H1 (cell line): ENCODE measurements at regions of chr1 and their contacts with region 1.

Region 1: DNA sequence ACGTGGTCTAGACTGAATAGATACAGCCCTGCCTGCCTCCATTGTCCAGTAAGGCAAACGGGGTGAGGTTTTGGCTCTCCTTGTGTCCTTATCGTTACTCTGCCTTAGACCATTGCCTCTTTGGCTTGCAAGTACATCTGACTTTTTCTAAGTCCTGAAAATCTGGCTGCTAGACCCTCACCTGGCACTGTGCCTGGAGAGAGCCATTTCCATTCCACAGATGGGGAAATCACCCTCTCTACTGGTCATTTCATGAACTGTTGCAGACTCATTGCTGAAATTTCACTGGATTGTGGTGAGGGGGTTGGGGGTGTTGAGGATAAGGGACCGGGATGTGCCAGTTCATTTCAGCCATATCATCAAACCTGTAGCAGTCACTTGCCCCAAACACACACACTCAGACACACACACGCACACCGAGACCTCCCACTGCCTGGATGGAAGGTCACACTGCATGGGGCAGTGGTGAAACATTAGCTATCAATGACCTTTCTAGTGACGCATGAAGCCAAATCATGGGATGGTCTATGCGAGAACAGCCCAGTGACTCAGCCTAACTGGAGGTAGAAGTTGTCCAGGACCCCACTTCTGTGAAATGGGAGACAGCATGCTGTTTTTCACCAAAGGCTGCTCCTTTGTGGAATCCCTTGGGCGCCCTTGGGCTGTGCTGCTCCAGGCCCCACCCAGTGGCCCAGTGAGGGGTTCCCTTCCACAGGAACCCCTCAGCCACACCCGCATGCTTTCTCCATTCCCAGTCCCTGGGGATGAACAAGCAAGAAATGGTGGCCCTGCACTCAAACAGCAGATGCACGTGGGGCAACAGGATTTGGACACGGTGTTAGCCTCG is 34.9 kb upstream of the VASH2 start:
- DNase-seq: peak in 1 of 2 experiments; percentile 56
- H3K4me3 ChIP-seq: peak overlapping the region in 2 of 4 experiments; percentile 17 to 51; a peak in 2 of 8 replicates
- H3K27ac ChIP-seq: peak overlapping the region; percentile 83
- H3K4me1 ChIP-seq: peaks cover 10 to 27% (median 20%) of the 10 kb centered on the region in 4 experiments
- H3K27me3 ChIP-seq: no peaks in the 10 kb centered on the region
- CTCF ChIP-seq: peak; percentile 34 to 77 (median 58)
- EP300 ChIP-seq: no peak
- POLR2A ChIP-seq: no peak; a peak in 1 of 3 replicates
- RAD21 ChIP-seq: peak; percentile 77 to 85

Region 2: DNA sequence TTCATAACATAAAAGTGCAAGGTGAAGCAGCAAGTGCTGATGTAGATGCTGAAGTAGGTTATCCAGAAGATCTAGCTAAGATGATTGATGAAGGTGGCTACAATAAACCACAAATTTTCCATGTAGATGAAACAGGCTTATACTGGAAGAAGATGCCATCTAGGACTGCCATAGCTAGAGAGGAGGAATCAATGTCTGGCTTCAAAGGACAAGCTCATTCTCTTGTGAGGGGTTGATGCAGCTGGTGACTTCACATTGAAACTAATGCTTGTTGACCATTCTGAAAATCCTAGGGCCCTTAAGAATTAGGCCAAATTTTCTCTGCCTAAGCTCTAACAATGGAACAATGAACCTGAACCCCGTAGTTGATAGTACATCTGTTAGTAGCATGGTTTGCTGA is 23.4 kb before region 1 on chr1:
- CTCF ChIA-PET with region 1: interaction called, 3 read pairs
- POLR2A ChIA-PET with region 1: interaction called, 94 read pairs
- DNase-seq: no peak
- H3K4me3 ChIP-seq: no peak overlapping the region
- H3K27ac ChIP-seq: no peak overlapping the region; the same call in 1 of the 2 replicates
- H3K4me1 ChIP-seq: no peaks in the 10 kb centered on the region
- H3K27me3 ChIP-seq: no peaks in the 10 kb centered on the region
- CTCF ChIP-seq: no peak
- EP300 ChIP-seq: no peak
- POLR2A ChIP-seq: peak; percentile 15 to 67; a peak in 2 of 3 replicates
- RAD21 ChIP-seq: no peak

Region 3: DNA sequence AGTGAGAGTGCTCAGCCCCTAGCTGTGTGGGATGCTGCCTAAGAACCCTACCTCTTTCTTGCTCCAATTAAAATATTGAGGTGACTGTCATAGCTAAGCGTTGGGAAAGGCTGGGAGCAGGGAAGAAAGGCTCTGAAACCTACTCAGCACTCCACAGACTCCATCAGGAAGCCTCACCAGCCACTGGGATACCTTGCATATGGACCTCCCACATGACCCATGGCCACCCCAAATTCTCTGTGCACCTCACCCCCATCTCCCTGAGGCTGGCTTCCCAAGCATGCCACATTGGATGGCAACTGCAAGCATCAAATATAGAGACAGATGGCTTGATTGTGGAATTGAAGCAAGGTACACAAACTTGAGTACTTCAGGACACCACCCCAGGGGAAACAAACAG is 15.6 kb before region 1 on chr1:
- CTCF ChIA-PET with region 1: interaction called, 11 read pairs
- POLR2A ChIA-PET with region 1: interaction called, 94 read pairs
- DNase-seq: no peak
- H3K4me3 ChIP-seq: no peak overlapping the region
- H3K27ac ChIP-seq: peak overlapping the region; percentile 8; the same call in 1 of the 2 replicates
- H3K4me1 ChIP-seq: peaks cover 3 to 9% (median 4%) of the 10 kb centered on the region in 4 experiments; a peak in 5 of 7 replicates
- H3K27me3 ChIP-seq: no peaks in the 10 kb centered on the region
- CTCF ChIP-seq: no peak
- EP300 ChIP-seq: no peak
- POLR2A ChIP-seq: no peak; a peak in 1 of 3 replicates
- RAD21 ChIP-seq: no peak

Region 4: DNA sequence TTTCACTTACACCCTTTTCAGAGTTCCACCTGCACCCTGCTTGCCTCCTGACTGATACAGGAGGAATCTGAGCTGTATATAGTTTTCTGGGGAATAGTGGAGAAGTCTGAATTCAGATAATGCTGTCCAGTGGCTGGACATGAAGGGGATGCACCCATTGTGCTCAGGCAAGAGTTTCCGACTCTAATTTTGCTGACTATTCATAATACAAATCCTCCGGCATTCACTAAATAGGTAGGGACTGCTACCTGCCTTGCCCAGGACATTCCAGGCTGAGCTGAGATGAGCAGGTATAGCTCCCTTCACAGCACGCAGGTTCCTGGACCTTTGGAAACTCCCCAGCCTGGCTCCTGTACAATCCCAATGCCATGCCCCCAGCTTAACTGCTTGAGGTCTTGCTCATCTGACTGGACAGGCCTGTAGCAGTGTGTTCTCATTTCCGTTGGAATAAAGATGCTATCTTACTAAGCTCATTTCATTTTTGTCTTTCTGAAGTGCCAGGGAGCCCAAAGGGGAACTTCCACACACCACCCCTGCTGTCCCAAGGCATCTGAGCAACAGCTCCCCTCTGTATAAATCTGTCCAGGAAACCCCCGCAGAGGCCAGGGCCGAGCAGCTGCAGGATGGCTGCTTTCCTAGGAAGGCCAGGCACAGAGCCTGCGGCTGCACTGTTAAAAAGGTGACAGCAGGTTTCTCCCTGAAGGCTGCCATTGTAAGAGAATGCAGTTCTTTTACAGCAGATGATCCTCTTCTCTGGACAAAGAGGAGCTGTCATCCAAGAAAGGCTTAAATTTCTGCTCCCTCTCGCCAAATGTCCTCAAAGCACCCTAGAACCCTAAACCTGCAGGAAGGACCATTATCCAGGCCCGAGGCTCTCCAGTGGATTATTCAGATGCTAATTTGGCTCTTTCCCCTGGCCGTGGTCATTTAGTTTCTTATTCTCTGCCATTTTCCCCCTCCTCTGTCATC is 13.1 kb after region 1 on chr1:
- CTCF ChIA-PET with region 1: interaction called, 10 read pairs
- POLR2A ChIA-PET with region 1: interaction called, 17 read pairs
- DNase-seq: peak in 1 of 2 experiments; percentile 54
- H3K4me3 ChIP-seq: peak overlapping the region in 1 of 4 experiments; percentile 16; a peak in 1 of 8 replicates
- H3K27ac ChIP-seq: peak overlapping the region; percentile 5; the same call in 1 of the 2 replicates
- H3K4me1 ChIP-seq: peaks cover 9 to 20% (median 14%) of the 10 kb centered on the region in 4 experiments
- H3K27me3 ChIP-seq: no peaks in the 10 kb centered on the region
- CTCF ChIP-seq: no peak
- EP300 ChIP-seq: no peak
- POLR2A ChIP-seq: no peak
- RAD21 ChIP-seq: no peak

Region 5: GRCh38 chr1:212950243-212951125 is 35.0 kb after region 1 on chr1 and contains the start of gene VASH2:
- CTCF ChIA-PET with region 1: interaction called, 22 read pairs
- POLR2A ChIA-PET with region 1: interaction called, 13 read pairs
- DNase-seq: peak; percentile 47 to 89
- H3K4me3 ChIP-seq: peak within 1 kb of the TSS; percentile 55 to 95 (median 94)
- H3K27ac ChIP-seq: no peak within 1 kb of the TSS
- H3K4me1 ChIP-seq: peaks cover 3 to 15% (median 11%) of the 10 kb centered on the region in 4 experiments
- H3K27me3 ChIP-seq: peaks cover 0 to 4% (median 0%) of the 10 kb centered on the region in 4 experiments; a peak in 1 of 7 replicates
- CTCF ChIP-seq: no peak
- EP300 ChIP-seq: no peak
- POLR2A ChIP-seq: peak in 1 of 2 experiments; percentile 31; a peak in 1 of 3 replicates
- RAD21 ChIP-seq: no peak
- total RNA-seq, gene VASH2: 184 and 187 TPM in 2 replicates

Region 6: DNA sequence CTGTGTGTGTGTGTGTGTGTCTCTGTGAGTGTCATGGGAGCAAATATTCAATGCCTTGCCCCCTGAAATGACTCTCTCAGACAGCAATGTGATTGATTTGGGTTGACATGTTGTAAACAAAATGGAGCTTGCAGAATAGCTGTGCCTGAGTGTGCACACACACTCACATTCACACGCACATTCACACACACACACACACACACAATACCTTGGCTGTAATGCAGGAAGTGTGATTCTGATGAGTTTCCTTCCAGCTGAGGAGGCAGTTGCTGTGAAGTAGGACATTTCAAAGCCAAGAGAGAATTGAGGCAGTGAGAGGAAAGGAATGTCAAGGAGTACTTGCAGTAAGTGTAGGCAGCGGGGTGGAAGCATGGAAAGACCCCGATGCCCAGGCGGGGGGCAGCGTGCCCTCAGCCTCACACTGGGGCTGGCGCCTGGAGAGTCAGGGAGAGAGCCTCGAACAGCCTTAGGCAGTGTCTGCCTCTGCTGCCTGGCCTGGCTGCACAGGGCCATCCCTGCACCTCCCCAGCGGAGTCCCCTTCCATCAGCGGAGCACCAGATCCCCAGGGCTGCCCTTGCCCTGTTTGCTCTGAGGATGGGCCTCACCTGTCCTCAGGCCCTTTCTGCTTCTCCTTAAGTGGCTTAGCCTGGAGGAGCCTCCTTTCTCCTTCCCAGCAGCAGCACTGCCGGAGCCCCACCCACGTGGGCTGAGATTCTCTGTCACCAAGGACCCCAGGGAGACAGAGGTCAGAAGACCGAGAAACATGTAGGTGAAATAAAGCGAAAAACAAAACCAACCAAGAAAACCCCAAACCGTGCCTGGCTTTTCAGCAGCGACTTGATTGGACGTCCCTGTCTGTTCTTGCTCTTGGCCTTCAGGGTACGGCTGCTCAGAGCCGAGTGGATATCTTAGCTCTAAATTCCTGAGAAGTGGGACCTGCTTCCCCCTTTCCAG is 44.1 kb after region 1 on chr1:
- CTCF ChIA-PET with region 1: interaction called, 9 read pairs
- POLR2A ChIA-PET with region 1: interaction called, 12 read pairs
- DNase-seq: no peak
- H3K4me3 ChIP-seq: no peak overlapping the region
- H3K27ac ChIP-seq: peak overlapping the region; percentile 7; the same call in 1 of the 2 replicates
- H3K4me1 ChIP-seq: peaks cover 3 to 12% (median 7%) of the 10 kb centered on the region in 4 experiments; a peak in 5 of 7 replicates
- H3K27me3 ChIP-seq: no peaks in the 10 kb centered on the region
- CTCF ChIP-seq: no peak
- EP300 ChIP-seq: no peak
- POLR2A ChIP-seq: no peak
- RAD21 ChIP-seq: no peak